ENCODE measurements at regions of chr1 and their contacts with region 1.

Region 1: GRCh38 chr1:220990427-220991339 is 111.4 kb downstream of the HLX start:
- DNase-seq: no peak
- ATAC-seq: no peak

Region 2: GRCh38 chr1:219798283-219799030 is 1192.2 kb before region 1 on chr1:
- intact Hi-C with region 1: no loop called
- DNase-seq: no peak
- ATAC-seq: no peak

Region 3: GRCh38 chr1:221182791-221183533 is 192.3 kb after region 1 on chr1:
- intact Hi-C with region 1: loop called (anchors 5 kb)
- DNase-seq: no peak
- ATAC-seq: no peak